OCI-LY7 (cell line): ENCODE measurements at regions of chr3 and their contacts with region 1.

Region 1: DNA sequence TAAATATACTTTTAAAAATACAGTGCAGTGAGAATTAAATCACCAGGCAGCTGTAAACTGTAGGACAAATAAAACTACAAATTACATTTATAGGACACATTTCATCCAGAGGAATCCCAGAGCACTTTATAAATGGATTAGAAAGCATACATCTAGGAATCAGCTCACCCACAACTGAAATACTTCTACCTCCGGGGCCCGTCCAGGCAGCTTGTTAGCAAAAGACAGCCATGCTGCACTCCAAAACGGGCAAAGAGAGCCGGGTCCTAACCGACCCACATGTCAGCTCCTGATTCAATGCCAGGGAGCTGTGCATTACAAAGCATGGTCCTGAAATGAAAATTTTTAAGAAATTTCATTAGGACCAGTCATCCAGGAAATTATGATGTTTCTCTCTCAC is 234.1 kb downstream of the CBLB start:
- DNase-seq: no peak
- H3K4me3 ChIP-seq: no peak overlapping the region
- H3K27ac ChIP-seq: no peak overlapping the region
- H3K4me1 ChIP-seq: no peaks in the 10 kb centered on the region
- CTCF ChIP-seq: no peak

Region 2: DNA sequence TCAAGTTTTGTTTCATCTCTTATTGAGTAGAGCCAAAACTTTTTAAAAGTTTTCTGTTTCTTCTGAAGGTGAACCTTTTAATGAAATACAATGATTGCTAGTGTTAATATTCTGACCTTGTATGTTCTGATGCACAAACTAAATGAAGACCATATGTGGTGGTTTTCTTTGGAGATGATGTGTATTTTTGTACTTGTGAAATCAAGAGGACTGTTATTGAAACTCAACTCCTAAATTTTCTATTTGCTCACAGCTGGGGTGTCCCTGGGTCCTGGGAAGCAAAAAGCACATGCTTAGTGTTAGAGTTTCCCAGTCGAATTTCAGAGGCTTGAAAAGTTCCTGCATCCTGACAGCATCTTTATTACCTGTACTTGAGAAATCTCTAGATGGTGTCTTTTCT is 1453.8 kb before region 1 on chr3:
- CTCF ChIA-PET with region 1: no interaction called
- POLR2A ChIA-PET with region 1: no interaction called
- intact Hi-C with region 1: loop called (anchors 5 kb)
- DNase-seq: no peak
- H3K4me3 ChIP-seq: no peak overlapping the region
- H3K27ac ChIP-seq: no peak overlapping the region
- H3K4me1 ChIP-seq: no peaks in the 10 kb centered on the region
- CTCF ChIP-seq: no peak

Region 3: DNA sequence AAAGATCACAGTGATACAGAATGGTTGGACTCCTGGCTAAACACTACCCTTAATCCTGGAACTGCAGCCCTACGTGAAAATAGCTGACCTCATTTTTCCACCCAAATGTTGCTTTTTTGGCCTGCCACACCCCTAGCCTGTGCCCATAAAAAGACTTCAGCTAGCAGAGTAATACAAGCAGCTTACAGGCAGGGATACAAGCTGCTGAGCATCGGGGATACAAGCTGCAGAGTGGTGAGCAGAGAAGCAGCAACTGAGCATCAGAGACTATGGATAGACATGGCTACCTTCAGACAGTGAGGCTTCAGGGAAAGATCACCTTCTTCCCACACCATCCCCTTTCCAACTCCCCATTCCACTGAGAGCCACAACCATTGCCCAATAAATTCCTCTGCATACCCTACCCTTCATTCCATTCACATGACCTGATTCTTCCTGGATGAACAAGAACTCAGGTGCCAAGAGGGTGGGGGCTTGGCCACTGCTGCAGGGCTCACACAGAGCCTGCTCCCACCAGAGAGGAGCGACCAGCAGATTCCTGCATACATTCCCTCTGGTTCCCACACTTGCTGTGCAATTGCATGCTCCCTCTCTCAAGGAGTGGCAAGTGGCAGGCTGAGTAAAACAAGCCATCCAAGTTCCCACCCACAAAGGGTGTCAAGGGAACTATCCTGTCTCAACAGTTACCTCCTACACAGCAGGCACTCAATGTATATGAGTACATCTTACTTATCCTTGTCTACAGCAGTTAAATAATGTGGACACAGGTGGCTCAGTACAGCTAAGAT is 50.5 kb before region 1 on chr3:
- CTCF ChIA-PET with region 1: no interaction called
- POLR2A ChIA-PET with region 1: no interaction called
- intact Hi-C with region 1: no loop called
- DNase-seq: no peak
- H3K4me3 ChIP-seq: no peak overlapping the region
- H3K27ac ChIP-seq: no peak overlapping the region
- H3K4me1 ChIP-seq: no peaks in the 10 kb centered on the region
- CTCF ChIP-seq: no peak

Region 4: GRCh38 chr3:105619651-105620050 is 15.1 kb before region 1 on chr3:
- CTCF ChIA-PET with region 1: no interaction called
- POLR2A ChIA-PET with region 1: no interaction called
- intact Hi-C with region 1: no loop called
- DNase-seq: no peak
- H3K4me3 ChIP-seq: no peak overlapping the region
- H3K27ac ChIP-seq: no peak overlapping the region
- H3K4me1 ChIP-seq: no peaks in the 10 kb centered on the region
- CTCF ChIP-seq: no peak

Region 5: GRCh38 chr3:105700575-105700974 is 65.9 kb after region 1 on chr3:
- CTCF ChIA-PET with region 1: no interaction called
- POLR2A ChIA-PET with region 1: no interaction called
- intact Hi-C with region 1: no loop called
- DNase-seq: no peak
- H3K4me3 ChIP-seq: no peak overlapping the region
- H3K27ac ChIP-seq: no peak overlapping the region
- H3K4me1 ChIP-seq: no peaks in the 10 kb centered on the region
- CTCF ChIP-seq: no peak